ENCODE measurements at regions of chr3 and their contacts with region 1.

Region 1: DNA sequence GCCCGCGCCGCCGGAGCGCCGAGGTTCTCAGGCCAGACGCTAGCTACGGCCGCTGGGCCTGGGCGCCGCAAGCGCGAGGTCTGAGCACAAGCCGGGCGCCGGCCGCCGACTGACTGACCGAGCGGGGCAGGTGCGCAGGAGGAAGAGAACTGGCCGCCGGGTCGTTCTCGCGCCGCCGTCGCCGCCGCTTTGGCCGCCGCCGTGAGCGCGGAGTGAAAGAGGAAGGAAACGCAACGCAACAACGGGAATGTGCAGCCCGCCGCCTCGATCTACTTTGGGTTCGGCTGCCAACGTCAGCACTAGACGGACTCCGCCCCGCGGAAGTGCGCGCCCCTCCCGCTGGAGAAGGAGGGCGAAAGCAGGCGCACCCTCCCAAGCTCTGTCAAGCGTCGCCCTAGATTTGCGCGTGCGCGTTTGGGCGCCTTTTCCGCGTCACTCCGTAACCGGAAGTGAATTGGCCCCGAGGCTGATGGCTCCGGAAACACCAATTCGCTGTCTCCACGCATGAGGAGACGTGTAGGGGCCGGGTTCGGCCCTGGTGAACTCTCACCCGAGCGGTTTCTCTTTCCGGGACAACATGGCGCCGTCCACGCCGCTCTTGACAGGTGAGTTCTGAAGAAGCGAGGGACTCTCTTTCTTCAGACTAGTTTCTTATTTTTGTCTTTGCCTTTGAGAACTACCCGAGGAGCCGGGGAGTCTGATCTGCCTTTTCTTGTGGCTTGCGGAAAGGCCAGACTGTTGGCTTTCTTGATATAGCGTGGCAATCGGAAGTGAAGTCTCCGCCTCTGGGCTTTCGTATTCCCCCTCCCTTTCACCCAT is at the starts of genes EIF2A and SERP1:
- DNase-seq: peak; percentile 100
- H3K4me3 Mint-ChIP-seq: peak within 1 kb of the TSS; percentile 93
- H3K27ac Mint-ChIP-seq: peak within 1 kb of the TSS; percentile 98
- H3K4me1 Mint-ChIP-seq: peaks cover 51% of the 10 kb centered on the region
- H3K27me3 Mint-ChIP-seq: no peaks in the 10 kb centered on the region
- CTCF ChIP-seq: no peak
- total RNA-seq, gene EIF2A: 142 and 167 TPM in 2 replicates
- total RNA-seq, gene SERP1: 147 and 152 TPM in 2 replicates

Region 2: GRCh38 chr3:150132101-150132749 is 414.2 kb before region 1 on chr3:
- CTCF ChIA-PET with region 1: no interaction called
- intact Hi-C with region 1: no loop called
- DNase-seq: peak; percentile 22
- H3K4me3 Mint-ChIP-seq: no peak overlapping the region
- H3K27ac Mint-ChIP-seq: no peak overlapping the region
- H3K4me1 Mint-ChIP-seq: no peaks in the 10 kb centered on the region
- H3K27me3 Mint-ChIP-seq: peaks cover 17% of the 10 kb centered on the region
- CTCF ChIP-seq: no peak

Region 3: DNA sequence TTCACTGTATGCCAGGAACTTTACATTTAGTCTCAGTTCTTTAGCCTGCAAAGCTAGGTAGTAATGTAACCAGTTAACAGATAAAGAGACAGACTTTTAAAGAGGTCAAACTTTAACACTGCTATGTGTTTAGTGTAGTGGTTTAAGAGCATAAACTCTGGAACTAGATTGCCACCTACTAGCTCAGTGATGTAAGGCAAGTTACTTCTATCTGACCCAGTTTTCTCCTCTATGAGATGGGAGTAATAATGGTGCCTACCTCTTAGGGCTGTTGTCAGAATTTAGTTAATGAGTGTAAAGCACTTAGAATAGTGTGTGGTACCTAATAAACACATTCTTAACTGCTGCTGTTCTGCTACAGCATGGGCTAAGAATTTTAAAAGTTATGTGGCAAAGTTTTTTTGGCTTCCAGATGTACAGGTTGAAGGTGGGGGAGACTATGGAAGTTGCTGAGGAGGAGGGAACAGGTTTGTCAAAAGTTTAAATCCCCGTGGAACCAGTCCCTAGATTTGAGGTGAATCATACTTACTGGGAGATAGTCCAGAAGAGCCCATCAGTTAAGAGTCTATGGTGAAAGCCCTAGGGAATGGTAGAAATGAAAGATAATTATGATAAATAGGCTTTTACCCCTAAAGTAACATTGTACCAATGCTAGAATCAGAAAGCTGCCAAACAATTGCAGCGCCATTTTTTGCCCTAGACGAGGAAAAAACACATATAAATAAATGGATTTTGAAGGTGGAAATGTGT is 124.5 kb before region 1 on chr3:
- CTCF ChIA-PET with region 1: no interaction called
- intact Hi-C with region 1: no loop called
- DNase-seq: no peak
- H3K4me3 Mint-ChIP-seq: no peak overlapping the region
- H3K27ac Mint-ChIP-seq: peak overlapping the region; percentile 27
- H3K4me1 Mint-ChIP-seq: peaks cover 45% of the 10 kb centered on the region
- H3K27me3 Mint-ChIP-seq: no peaks in the 10 kb centered on the region
- CTCF ChIP-seq: no peak

Region 4: DNA sequence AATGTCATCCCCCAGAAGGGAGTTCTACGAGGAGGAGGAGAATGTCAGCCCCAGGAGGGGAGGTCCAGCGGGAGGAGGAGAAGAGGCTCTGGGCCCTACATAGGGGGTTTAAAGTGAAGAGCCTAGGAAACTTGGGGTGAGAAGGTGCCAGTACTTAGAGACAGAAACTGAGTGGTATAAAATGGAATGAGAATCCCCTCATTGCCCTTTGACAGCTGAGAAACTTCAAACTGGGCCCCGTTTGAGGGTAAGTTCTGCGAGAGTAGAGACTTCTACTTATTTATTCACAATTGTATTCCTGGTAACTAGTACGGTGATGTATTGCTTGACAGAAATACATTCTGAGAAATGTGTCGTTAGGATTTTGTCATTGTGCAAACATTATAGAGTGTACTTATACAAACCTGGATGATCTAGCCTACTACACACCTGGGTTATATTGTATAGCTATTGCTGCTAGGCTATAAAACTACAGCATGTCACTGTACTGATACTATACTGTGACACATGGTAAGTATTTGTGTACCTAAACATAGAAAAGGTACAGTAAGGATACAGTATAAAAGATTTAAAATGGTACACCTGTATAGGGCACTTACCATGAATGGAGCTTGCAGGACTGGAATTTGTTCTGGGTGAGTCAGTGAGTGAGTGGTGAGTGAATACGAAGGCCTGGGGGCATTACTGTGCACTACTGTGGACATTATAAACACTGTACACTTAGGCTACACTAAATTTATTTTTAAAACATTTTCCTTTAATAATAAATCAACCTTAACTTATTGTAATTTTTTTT is 76.3 kb before region 1 on chr3:
- CTCF ChIA-PET with region 1: no interaction called
- intact Hi-C with region 1: loop called (anchors 2 kb)
- DNase-seq: peak; percentile 67
- H3K4me3 Mint-ChIP-seq: peak overlapping the region; percentile 43
- H3K27ac Mint-ChIP-seq: peak overlapping the region; percentile 81
- H3K4me1 Mint-ChIP-seq: peaks cover 39% of the 10 kb centered on the region
- H3K27me3 Mint-ChIP-seq: no peaks in the 10 kb centered on the region
- CTCF ChIP-seq: no peak